ENCODE measurements at regions of chr7 and their contacts with region 1.

Region 1: GRCh38 chr7:140810830-140811556 is 113.7 kb downstream of the BRAF start:
- DNase-seq: no peak
- ATAC-seq: peak; percentile 89 to 92
- H3K4me3 ChIP-seq: no peak overlapping the region
- H3K27ac ChIP-seq: no peak overlapping the region
- H3K4me1 ChIP-seq: no peaks in the 10 kb centered on the region
- H3K27me3 ChIP-seq: no peaks in the 10 kb centered on the region

Region 2: DNA sequence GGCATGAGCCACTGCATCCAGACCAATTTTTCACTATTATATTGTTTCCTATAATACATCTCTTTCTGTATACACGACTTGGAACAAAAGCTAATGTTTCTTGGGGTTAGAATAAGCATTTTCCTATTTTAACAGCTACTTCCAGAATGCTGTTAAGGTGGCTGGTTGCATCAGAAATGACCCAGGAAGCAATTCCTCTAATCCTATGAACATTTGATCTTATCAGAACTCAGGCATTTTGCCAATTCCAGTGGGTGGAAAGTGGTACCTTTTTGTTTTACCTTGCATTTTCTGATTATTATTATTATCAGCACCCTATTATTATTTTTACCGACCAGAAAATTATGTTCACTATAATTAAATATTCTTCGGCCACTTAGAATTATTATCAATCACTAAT is 41.1 kb before region 1 on chr7:
- intact Hi-C with region 1: no loop called
- DNase-seq: no peak
- ATAC-seq: no peak
- H3K4me3 ChIP-seq: no peak overlapping the region
- H3K27ac ChIP-seq: no peak overlapping the region
- H3K4me1 ChIP-seq: no peaks in the 10 kb centered on the region
- H3K27me3 ChIP-seq: no peaks in the 10 kb centered on the region

Region 3: GRCh38 chr7:140924019-140924820 is 113.2 kb after region 1 on chr7:
- intact Hi-C with region 1: loop called in 1 of 4 experiments (anchors 10 kb)
- DNase-seq: peak; percentile 78 to 92 (median 90)
- ATAC-seq: peak; percentile 86 to 89
- H3K4me3 ChIP-seq: peak overlapping the region; percentile 89
- H3K27ac ChIP-seq: peak overlapping the region; percentile 82
- H3K4me1 ChIP-seq: no peaks in the 10 kb centered on the region
- H3K27me3 ChIP-seq: no peaks in the 10 kb centered on the region

Region 4: DNA sequence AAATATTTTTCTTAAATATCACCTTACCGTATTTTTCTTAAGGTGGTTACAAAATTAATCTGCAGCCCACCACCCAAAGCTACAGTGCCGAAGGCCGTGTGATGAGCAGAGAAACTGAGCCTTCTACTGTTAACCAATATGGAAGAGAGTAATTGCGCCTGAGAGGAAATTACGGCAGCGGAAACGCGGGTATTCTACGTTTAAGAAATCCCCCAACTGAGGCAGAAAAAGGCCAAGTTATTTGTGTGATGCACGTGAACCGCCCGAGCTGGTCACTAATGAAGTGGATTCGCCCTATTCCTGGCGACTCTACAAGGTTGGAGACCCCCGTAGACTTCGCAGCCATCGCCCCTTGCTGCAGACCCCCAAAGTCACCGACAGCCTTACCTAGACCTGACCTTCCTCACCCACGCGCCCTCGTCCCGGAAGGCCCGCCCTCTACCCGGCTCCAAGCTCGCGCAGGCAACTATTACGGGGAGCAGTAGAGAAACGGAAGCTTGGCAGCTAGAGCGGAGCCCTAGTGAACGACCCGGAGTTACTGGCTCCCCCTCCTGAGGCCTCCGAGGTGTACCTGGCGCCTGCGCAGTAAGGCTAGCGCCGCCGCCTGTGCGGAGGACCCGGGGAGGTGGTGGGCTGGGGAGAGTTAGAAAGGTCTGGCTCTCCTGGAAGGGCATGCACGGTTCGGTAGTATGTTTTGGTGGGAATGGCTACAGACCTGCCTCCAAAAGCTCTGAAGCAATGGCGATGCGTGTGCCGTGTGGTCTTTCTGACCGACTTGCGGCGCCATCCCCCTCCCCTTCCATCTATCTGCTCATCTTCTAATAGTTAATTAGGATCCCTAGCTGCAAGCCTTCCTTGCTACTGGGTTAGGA is 203.8 kb after region 1 on chr7 and contains the start of gene MRPS33:
- intact Hi-C with region 1: loop called (anchors 5 to 10 kb)
- DNase-seq: peak; percentile 97 to 98 (median 97)
- ATAC-seq: peak; percentile 100
- H3K4me3 ChIP-seq: peak within 1 kb of the TSS; percentile 63
- H3K27ac ChIP-seq: peak within 1 kb of the TSS; percentile 93
- H3K4me1 ChIP-seq: peaks cover 3% of the 10 kb centered on the region
- H3K27me3 ChIP-seq: no peaks in the 10 kb centered on the region
- total RNA-seq, gene MRPS33: 78.9 to 102 (median 89.9) TPM

Region 5: DNA sequence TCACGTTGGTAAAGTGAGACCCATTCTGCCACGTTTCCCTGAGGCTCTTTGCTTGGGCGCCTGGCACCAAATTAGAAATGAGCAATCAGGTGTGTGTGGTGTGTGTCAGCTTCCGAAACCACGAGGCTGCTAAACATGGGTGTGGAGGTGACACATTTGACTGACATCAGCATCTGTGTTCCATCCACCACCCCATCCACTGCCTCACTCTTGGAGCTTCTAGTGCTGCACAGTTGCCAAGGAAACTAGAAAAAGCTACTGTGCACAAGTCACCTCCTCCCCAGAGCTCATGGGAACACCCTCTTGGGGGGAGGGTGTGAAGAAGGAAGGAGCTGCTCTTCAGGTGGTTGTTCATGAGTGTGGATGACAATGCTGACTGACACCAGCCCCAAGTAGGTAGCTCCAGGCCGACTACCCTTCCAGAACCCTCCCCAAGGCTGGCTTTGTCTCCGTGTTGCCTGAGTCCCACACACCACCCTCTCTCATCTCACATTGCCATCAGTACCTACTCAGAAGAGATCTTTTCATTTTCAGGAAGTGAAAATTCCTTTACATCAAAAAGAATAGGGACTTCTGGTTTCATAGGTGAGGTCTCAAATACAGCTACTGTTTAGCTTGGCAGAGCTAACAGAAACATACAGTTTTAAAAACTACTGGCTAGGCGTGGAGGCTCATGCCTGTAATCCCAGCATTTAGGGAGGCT is 415.1 kb after region 1 on chr7:
- intact Hi-C with region 1: loop called in 2 of 4 experiments (anchors 5 kb)
- DNase-seq: no peak
- ATAC-seq: no peak
- H3K4me3 ChIP-seq: no peak overlapping the region
- H3K27ac ChIP-seq: no peak overlapping the region
- H3K4me1 ChIP-seq: no peaks in the 10 kb centered on the region
- H3K27me3 ChIP-seq: no peaks in the 10 kb centered on the region

Region 6: DNA sequence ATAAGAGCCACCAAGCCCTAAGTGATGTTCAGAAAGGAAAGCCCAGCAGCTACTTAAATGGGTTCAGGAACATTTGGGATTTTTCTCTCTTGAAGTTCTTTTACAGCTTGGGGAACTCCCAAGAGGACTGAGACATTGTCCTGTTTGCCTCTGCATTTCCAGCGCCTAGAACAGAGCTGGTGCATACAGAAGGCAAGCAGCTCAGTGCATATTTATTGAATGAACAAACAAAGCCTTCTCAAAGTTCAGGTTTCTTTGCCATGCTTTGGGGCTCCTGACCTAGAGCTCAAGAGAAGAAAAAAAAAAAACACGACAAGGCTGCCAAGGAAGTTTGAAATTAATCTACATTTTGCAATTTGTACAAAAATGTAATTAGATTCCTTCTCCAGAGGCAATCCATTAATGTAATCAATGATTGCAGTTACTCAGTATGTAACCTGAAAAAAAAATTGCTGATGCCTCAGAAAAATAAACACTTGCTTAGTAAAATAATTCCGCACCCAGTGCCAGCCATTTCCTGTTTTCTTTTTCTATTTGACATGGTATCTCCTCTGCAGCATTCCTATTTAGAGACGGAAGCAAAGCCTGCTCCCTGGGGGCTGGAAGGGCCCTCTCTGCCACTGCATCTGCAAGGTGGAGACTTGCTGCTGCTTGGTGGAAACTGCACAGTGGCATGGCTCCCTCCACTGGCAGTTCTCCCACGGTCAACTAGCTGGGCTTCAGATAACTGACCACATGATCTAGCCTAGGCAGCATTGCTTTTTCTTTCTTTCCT is 420.2 kb after region 1 on chr7:
- intact Hi-C with region 1: loop called in 2 of 4 experiments (anchors 5 kb)
- DNase-seq: peak; percentile 20 to 71 (median 69)
- ATAC-seq: peak; percentile 65 to 84
- H3K4me3 ChIP-seq: no peak overlapping the region
- H3K27ac ChIP-seq: no peak overlapping the region
- H3K4me1 ChIP-seq: no peaks in the 10 kb centered on the region
- H3K27me3 ChIP-seq: no peaks in the 10 kb centered on the region

Measured in right cardiac atrium (tissue), 5 donors.